MCF 10A (cell line): ENCODE measurements at regions of chr21 and their contacts with region 1.

Region 1: DNA sequence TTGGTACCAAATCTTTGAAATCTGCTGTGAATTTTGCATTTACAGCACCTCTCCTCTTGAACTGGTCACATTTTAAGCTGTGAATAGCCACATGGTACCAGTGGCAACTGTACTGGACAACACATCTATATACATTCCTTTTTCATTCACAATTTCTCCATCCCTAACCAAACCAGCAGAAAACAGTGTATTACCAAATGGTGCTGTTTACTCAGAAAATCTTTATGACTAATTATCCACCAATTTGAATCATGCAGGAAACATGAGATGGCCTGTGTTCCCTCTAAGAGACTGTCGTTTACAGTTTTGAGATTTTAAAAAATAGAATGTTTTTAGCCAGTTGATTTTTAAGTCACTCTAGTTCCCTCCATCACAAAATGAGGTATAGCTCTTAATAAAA is 17.6 kb upstream of the CCT8 start:
- DNase-seq: peak; percentile 65
- H3K4me3 Mint-ChIP-seq: no peak overlapping the region
- H3K27ac Mint-ChIP-seq: peak overlapping the region; percentile 80
- H3K4me1 Mint-ChIP-seq: peaks cover 34% of the 10 kb centered on the region
- H3K27me3 Mint-ChIP-seq: no peaks in the 10 kb centered on the region
- CTCF ChIP-seq: no peak

Region 2: DNA sequence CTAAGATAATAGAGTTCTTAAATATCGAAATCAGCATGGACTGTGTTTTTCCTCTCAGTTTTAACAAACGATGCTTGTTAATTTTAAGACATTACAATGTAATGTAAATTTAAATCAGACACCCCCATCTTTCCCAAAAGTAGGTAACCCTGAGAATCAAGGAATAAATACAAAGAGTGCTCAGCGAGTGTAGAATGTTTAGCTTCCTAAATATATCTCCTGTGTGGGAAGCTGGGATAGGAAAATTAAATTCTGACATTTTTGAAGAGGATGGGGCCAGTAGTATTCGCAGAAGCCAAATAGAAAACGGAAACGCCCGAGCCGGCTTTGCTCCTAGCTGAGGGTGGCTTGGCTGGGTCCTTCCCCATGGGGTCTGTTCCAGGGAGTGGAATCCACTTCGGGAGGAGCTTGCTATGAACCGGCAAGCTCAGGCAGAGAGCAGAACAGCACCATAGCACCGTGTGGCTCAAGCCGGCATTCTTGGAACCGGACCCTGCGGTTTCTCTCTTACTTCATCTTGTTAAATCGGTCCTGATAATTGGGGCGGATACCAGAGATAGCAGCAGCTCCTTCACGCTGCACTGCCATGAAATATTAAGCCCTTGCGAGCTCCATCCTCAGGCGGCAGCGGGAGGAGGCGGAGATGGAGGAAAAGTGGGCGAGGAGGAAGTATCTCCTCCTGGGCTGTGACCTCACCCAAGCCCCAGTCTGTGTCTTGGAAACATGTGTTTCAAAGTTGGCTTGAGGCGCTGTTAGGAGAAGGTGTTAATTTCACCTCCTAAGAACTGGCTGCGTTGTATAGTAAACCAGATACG is 64.3 kb after region 1 on chr21:
- CTCF ChIA-PET with region 1: interaction called, 9 read pairs
- POLR2A ChIA-PET with region 1: interaction called, 58 read pairs
- intact Hi-C with region 1: no loop called
- DNase-seq: peak; percentile 52
- H3K4me3 Mint-ChIP-seq: peak overlapping the region; percentile 58
- H3K27ac Mint-ChIP-seq: peak overlapping the region; percentile 39
- H3K4me1 Mint-ChIP-seq: peaks cover 25% of the 10 kb centered on the region
- H3K27me3 Mint-ChIP-seq: no peaks in the 10 kb centered on the region
- CTCF ChIP-seq: no peak

Region 3: DNA sequence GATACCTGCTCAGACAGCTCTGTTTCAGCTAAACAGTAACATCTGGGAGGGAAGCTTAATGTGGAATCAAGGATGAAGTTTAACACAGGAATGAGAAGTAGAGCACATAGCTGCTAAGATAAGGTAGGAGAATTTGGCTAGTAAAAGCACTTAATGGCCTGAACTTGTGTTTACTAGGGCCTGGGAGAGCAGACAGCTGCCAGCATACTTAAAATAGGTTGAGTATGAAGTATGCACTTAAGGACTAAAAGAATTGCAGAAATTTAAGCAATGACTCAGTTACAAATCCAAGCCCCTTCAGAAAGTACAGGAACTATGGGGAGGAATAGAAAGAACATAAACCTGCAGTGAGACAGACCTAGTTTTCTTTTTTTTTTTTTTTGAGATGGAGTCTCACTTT is 260.7 kb after region 1 on chr21:
- CTCF ChIA-PET with region 1: interaction called, 8 read pairs
- POLR2A ChIA-PET with region 1: interaction called, 16 read pairs
- intact Hi-C with region 1: loop called (anchors 1 kb)
- DNase-seq: no peak
- H3K4me3 Mint-ChIP-seq: no peak overlapping the region
- H3K27ac Mint-ChIP-seq: peak overlapping the region; percentile 21
- H3K4me1 Mint-ChIP-seq: peaks cover 13% of the 10 kb centered on the region
- H3K27me3 Mint-ChIP-seq: no peaks in the 10 kb centered on the region
- CTCF ChIP-seq: no peak

Region 4: GRCh38 chr21:29499734-29500343 is 408.8 kb after region 1 on chr21:
- CTCF ChIA-PET with region 1: interaction called, 5 read pairs
- POLR2A ChIA-PET with region 1: no interaction called
- intact Hi-C with region 1: loop called (anchors 1 kb)
- DNase-seq: peak; percentile 52
- H3K4me3 Mint-ChIP-seq: no peak overlapping the region
- H3K27ac Mint-ChIP-seq: no peak overlapping the region
- H3K4me1 Mint-ChIP-seq: peaks cover 6% of the 10 kb centered on the region
- H3K27me3 Mint-ChIP-seq: no peaks in the 10 kb centered on the region
- CTCF ChIP-seq: peak; percentile 48

Region 5: DNA sequence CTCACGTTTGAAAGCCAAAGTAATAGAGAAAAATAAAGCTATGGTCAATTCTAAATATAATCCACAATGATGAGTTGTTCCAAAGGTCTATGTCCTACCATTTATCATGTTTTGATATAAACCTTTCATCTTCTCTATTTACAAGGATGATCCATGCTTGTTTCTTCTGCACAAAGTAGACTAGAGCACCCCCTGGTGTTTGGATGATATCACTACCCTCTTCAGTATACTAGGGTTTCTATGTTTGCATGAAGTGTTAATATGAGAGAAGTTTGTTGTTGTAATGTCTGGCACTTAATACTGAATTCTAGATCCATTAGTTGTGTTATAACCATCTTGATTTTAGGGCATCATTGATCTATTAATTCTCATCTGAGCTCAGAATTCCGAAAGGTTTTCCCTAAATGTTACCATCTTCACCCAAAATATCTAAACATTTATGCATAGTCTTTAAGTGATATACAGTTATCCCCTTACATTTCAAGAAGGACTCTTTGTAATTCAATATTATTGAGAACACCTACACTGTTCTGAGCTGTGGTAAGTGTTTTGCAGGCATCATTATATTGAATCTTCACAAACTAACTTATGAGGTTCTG is 1103.8 kb after region 1 on chr21:
- CTCF ChIA-PET with region 1: no interaction called
- POLR2A ChIA-PET with region 1: no interaction called
- intact Hi-C with region 1: loop called (anchors 1 kb)
- DNase-seq: peak; percentile 72
- H3K4me3 Mint-ChIP-seq: no peak overlapping the region
- H3K27ac Mint-ChIP-seq: no peak overlapping the region
- H3K4me1 Mint-ChIP-seq: no peaks in the 10 kb centered on the region
- H3K27me3 Mint-ChIP-seq: no peaks in the 10 kb centered on the region
- CTCF ChIP-seq: peak; percentile 80